ENCODE measurements at regions of chr1 and their contacts with region 1.

Region 1: DNA sequence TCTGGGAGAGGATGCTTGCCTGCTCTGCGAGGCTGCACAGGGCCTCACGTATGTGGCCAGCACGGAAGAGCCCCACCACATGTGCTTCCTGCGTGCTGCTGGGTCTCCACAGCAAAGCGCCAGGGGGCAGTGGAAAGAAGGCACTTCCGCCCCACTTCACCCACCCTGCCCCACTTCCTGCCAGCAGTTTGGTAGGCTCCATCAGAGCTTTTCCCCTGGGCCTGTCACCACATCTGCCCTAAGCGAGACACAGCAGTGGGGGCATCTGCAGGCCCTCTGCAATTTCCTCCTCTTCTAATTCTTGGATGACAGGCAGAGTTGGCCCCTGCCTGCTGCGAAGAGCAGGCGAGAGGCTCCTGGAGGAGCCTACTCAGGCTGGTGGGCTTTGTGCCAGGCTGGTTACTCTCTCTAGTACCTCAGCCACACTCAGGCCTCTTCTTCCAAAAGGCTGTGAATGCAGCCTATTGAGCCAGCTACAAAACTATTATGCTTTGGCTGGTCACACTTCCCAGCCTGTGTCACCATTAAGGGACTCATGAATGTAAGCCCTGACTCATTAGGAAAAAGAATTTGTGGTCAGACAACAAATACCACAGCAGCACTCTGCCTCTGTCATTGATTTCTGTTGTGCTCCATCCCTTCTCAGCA is 25.0 kb downstream of the CD244 start:
- DNase-seq: no peak
- H3K4me3 ChIP-seq: no peak overlapping the region
- H3K27ac ChIP-seq: no peak overlapping the region
- H3K4me1 ChIP-seq: peaks cover 5% of the 10 kb centered on the region
- H3K27me3 ChIP-seq: no peaks in the 10 kb centered on the region
- CTCF ChIP-seq: no peak

Region 2: DNA sequence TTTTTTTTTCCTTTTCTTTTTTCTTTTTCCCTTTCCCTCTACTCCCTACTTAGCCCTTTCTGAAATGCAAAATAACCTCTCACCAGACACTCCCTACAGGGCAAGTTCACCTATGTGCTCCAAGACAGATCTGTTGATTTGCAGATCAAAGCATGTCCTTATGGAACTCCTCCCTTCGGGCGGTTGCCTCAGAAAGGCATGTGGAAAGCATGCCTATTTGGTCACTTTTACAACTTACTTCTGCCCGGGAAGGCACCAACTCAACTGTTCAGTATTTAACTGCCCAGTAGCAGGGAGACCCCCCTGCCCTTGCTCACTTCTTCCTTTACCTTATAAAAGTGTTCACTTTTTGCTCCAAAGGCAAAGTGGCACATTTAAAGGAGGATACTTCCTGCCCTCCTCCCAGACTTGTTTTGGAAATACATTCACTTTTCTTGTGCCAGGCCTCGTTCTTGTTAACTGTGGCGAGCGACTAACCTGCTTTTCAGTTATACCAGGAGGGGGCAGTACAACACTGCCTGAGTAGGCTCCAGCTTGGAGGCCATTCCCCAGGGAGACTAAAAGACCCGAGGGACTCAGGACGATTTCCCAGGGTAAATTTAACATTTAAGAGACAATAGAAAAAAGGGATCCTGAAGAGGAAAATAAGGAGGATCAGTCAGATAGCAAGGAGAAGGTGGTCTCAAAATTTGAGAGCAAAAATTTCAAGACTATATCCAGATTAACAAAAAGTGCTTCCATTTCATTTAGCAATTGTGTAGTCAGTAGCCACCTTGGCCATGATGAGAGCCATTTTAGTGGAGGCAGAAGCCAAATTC is 111.0 kb before region 1 on chr1:
- intact Hi-C with region 1: no loop called
- DNase-seq: peak; percentile 69
- H3K4me3 ChIP-seq: no peak overlapping the region
- H3K27ac ChIP-seq: peak overlapping the region; percentile 39
- H3K4me1 ChIP-seq: peaks cover 3% of the 10 kb centered on the region
- H3K27me3 ChIP-seq: no peaks in the 10 kb centered on the region
- CTCF ChIP-seq: peak; percentile 84

Region 3: DNA sequence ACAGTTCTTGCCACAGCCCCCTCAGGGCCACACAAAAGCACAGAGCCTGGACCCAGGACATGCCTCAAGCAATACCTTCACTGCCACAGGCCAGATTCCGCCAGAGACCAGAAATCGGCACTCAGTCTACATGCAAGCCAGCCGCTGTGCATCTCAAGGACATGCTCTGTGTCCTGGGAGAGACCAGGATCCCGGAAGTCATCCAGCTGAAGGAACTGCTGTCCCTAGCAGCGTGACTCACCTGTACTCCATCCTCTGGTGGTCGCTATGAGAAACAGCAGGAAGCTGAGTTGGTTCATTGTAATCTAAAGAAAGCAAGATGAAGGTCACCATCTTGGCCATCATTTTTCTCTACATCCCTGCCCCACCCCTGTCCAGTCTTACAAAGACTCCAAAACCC is 46.9 kb after region 1 on chr1:
- intact Hi-C with region 1: loop called (anchors 5 kb)
- DNase-seq: no peak
- H3K4me3 ChIP-seq: no peak overlapping the region
- H3K27ac ChIP-seq: no peak overlapping the region
- H3K4me1 ChIP-seq: no peaks in the 10 kb centered on the region
- H3K27me3 ChIP-seq: no peaks in the 10 kb centered on the region
- CTCF ChIP-seq: peak; percentile 12

Region 4: DNA sequence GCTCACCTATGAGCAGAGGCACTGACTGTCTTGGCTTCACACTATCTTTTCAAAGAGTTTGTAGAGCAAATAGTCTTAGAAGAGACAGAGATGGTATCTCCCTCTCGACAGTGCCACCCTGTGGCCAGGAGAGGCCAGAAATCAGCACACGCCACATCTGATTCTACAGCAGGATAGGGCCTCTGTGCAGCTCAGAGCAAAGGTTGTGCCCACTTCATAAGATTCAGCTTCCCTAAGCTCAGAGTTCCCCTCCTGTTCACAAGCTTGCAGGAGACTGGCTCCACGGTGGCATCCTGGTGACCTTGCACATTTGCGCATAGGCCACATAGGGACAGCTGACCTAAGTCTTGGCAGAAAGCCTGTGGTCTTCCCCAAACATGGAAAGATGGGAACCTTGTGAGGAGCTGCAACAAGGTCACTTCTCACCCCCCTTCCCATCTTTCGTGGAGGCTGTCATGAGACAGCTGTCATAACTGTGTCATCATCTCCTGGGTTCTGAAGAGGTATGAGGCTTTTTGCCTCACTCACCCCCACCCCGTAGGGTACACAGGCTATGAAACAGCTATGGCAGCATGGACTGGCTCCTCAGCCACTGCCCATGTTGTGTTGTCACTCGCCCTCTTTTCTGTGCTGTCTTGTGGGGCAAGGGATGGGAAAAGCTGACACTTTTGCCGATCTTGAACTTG is 113.9 kb after region 1 on chr1:
- intact Hi-C with region 1: loop called (anchors 2 kb)
- DNase-seq: peak; percentile 74
- H3K4me3 ChIP-seq: no peak overlapping the region
- H3K27ac ChIP-seq: no peak overlapping the region
- H3K4me1 ChIP-seq: no peaks in the 10 kb centered on the region
- H3K27me3 ChIP-seq: no peaks in the 10 kb centered on the region
- CTCF ChIP-seq: peak; percentile 67

Region 5: GRCh38 chr1:160963521-160963920 is 125.8 kb after region 1 on chr1:
- intact Hi-C with region 1: no loop called
- DNase-seq: no peak
- H3K4me3 ChIP-seq: no peak overlapping the region
- H3K27ac ChIP-seq: no peak overlapping the region
- H3K4me1 ChIP-seq: no peaks in the 10 kb centered on the region
- H3K27me3 ChIP-seq: no peaks in the 10 kb centered on the region
- CTCF ChIP-seq: no peak

Region 6: DNA sequence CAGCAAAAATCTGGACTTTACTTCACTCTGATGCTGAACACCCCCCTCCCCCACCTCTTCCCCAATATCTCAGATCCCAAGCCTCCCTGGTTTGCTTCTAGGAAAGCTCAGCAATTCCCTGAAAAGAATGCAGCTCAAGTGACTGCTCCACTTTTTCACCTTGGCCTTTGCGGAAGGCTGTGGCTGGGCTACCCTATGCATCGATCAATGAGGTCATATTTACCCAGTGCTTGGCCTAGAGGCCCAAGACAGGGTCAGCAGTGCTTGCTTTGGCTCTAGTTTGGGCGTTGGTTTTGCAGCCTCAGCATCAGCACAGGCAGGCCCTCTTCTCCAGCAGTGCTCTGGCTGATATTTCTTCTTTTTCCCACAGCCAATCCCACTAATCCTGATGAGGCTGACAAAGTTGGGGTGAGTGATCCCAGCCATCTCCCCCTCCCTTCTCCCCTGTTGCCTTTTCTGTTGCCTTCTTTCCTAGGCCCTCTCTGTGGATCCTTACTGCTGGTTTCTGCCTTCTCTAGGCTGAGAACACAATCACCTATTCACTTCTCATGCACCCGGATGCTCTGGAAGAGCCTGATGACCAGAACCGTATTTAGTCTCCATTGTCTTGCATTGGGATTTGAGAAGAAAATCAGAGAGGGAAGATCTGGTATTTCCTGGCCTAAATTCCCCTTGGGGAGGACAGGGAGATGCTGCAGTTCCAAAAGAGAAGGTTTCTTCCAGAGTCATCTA is 839.4 kb after region 1 on chr1:
- intact Hi-C with region 1: no loop called
- DNase-seq: no peak
- H3K4me3 ChIP-seq: no peak overlapping the region
- H3K27ac ChIP-seq: no peak overlapping the region
- H3K4me1 ChIP-seq: no peaks in the 10 kb centered on the region
- H3K27me3 ChIP-seq: no peaks in the 10 kb centered on the region
- CTCF ChIP-seq: no peak

Measured in colonic mucosa (tissue), 4 donors.